Calu3 (cell line): ENCODE measurements at regions of chr12 and their contacts with region 1.

Region 1: GRCh38 chr12:65306366-65307168 is 28.1 kb downstream of the MSRB3 start:
- DNase-seq: peak; percentile 54
- H3K4me3 Mint-ChIP-seq: peak overlapping the region; percentile 25
- H3K27ac Mint-ChIP-seq: peak overlapping the region; percentile 33
- H3K4me1 Mint-ChIP-seq: peaks cover 12% of the 10 kb centered on the region
- H3K27me3 Mint-ChIP-seq: peaks cover 15% of the 10 kb centered on the region
- CTCF ChIP-seq: peak; percentile 77

Region 2: DNA sequence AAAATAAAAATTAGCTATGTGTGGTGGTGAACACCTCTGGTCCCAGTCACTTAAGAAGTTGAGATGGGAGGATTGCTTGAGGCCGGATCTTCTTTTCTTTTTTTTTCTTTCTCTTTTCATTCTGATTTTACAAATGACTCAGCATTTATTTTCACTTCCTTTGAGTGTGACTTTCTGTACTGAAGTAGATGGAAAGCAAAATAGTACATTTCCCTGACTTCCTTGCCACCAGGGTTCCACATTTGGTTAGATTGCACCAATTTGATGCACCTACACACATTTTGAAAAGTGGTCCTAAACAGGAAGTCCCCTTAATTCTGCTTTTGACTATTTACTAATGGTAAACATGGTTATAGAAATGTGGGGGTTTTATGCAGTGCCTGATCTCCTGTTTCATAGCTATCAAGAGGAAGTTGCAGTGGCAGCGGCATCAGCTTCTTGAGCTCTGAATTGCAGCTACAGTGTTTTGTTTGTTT is 150.2 kb before region 1 on chr12:
- CTCF ChIA-PET with region 1: no interaction called
- intact Hi-C with region 1: no loop called
- DNase-seq: no peak
- H3K4me3 Mint-ChIP-seq: no peak overlapping the region
- H3K27ac Mint-ChIP-seq: no peak overlapping the region
- H3K4me1 Mint-ChIP-seq: peaks cover 10% of the 10 kb centered on the region
- H3K27me3 Mint-ChIP-seq: peaks cover 11% of the 10 kb centered on the region
- CTCF ChIP-seq: no peak

Region 3: GRCh38 chr12:65415826-65416225 is 109.3 kb after region 1 on chr12:
- CTCF ChIA-PET with region 1: no interaction called
- intact Hi-C with region 1: no loop called
- DNase-seq: peak; percentile 3
- H3K4me3 Mint-ChIP-seq: no peak overlapping the region
- H3K27ac Mint-ChIP-seq: no peak overlapping the region
- H3K4me1 Mint-ChIP-seq: peaks cover 26% of the 10 kb centered on the region
- H3K27me3 Mint-ChIP-seq: no peaks in the 10 kb centered on the region
- CTCF ChIP-seq: no peak

Region 4: GRCh38 chr12:65878544-65878943 is 572.0 kb after region 1 on chr12:
- CTCF ChIA-PET with region 1: no interaction called
- intact Hi-C with region 1: loop called (anchors 5 kb)
- DNase-seq: peak; percentile 46
- H3K4me3 Mint-ChIP-seq: no peak overlapping the region
- H3K27ac Mint-ChIP-seq: no peak overlapping the region
- H3K4me1 Mint-ChIP-seq: peaks cover 41% of the 10 kb centered on the region
- H3K27me3 Mint-ChIP-seq: no peaks in the 10 kb centered on the region
- CTCF ChIP-seq: no peak

Region 5: GRCh38 chr12:66035288-66035966 is 728.9 kb after region 1 on chr12:
- CTCF ChIA-PET with region 1: interaction called, 3 read pairs
- intact Hi-C with region 1: loop called (anchors 5 kb)
- DNase-seq: peak; percentile 32
- H3K4me3 Mint-ChIP-seq: no peak overlapping the region
- H3K27ac Mint-ChIP-seq: no peak overlapping the region
- H3K4me1 Mint-ChIP-seq: no peaks in the 10 kb centered on the region
- H3K27me3 Mint-ChIP-seq: peaks cover 10% of the 10 kb centered on the region
- CTCF ChIP-seq: peak; percentile 51

Region 6: DNA sequence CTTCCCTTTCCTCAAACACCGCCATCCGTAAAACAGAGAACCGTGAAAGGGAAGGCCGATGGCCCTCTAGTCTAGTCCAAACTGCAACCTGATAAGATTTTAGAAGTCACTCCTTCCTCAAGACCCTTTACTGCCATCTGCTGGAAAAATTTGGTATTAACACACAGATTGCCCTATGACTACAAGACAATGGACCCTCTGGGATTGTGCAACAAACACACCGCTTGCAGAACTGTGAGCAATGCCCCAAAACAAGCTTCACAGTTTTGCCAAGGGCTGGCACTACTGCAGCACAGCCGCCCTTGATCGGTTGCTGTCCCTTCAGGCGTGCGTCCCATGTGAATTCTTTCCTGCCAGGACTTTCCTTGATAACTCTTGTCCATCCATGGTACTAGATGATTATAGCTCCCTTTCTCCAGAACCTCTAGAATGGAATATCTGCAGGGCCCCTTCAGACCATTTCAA is 800.9 kb after region 1 on chr12:
- CTCF ChIA-PET with region 1: no interaction called
- intact Hi-C with region 1: loop called (anchors 1 kb)
- DNase-seq: peak; percentile 88
- H3K4me3 Mint-ChIP-seq: no peak overlapping the region
- H3K27ac Mint-ChIP-seq: no peak overlapping the region
- H3K4me1 Mint-ChIP-seq: peaks cover 7% of the 10 kb centered on the region
- H3K27me3 Mint-ChIP-seq: peaks cover 25% of the 10 kb centered on the region
- CTCF ChIP-seq: peak; percentile 78